Right cardiac atrium (tissue), 5 donors: ENCODE measurements at regions of chr5 and their contacts with region 1.

Region 1: GRCh38 chr5:54401515-54401914 is 54.0 kb upstream of the HSPB3 start:
- DNase-seq: no peak
- ATAC-seq: no peak
- H3K4me3 ChIP-seq: no peak overlapping the region
- H3K27ac ChIP-seq: no peak overlapping the region
- H3K4me1 ChIP-seq: no peaks in the 10 kb centered on the region
- H3K27me3 ChIP-seq: no peaks in the 10 kb centered on the region

Region 2: DNA sequence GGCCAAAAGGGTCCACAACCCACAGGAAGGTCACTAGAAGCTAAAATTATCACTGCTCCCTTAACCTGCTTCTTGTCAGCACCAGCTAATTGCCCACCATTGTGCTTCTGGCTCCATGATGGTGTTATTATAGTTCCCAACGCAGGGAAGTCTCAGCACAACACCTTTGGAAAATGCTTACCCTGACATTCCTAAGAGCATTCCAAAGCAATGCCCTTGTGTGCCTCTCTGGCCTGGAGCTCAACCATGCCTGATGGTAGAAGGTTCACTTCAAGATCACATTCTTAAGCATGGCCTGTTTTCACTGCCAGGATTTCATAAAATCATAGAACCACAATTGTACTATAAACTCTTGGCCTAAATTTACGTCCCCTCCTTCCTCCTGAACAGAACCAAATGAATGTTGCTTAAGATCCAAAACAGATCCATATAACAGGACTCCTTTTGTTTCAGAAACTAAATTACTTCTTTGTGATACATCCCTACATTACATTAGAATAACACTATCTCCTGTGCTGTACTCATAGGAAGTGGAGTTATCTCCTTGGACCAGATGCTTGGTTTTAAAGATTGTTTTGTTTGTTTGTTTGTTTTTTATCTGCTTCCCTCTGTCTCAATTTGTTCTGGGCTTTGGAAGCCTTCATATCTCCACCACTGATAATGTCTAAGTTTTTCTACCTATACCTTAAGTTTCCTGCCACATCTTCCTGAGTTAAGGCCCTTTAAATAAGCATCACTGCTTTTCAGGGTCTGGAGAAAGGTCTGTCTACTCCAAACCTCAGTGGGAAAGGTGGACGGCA is 123.3 kb before region 1 on chr5:
- intact Hi-C with region 1: no loop called
- DNase-seq: no peak
- ATAC-seq: peak in 1 of 2 donors; percentile 24
- H3K4me3 ChIP-seq: no peak overlapping the region
- H3K27ac ChIP-seq: no peak overlapping the region
- H3K4me1 ChIP-seq: no peaks in the 10 kb centered on the region
- H3K27me3 ChIP-seq: no peaks in the 10 kb centered on the region

Region 3: DNA sequence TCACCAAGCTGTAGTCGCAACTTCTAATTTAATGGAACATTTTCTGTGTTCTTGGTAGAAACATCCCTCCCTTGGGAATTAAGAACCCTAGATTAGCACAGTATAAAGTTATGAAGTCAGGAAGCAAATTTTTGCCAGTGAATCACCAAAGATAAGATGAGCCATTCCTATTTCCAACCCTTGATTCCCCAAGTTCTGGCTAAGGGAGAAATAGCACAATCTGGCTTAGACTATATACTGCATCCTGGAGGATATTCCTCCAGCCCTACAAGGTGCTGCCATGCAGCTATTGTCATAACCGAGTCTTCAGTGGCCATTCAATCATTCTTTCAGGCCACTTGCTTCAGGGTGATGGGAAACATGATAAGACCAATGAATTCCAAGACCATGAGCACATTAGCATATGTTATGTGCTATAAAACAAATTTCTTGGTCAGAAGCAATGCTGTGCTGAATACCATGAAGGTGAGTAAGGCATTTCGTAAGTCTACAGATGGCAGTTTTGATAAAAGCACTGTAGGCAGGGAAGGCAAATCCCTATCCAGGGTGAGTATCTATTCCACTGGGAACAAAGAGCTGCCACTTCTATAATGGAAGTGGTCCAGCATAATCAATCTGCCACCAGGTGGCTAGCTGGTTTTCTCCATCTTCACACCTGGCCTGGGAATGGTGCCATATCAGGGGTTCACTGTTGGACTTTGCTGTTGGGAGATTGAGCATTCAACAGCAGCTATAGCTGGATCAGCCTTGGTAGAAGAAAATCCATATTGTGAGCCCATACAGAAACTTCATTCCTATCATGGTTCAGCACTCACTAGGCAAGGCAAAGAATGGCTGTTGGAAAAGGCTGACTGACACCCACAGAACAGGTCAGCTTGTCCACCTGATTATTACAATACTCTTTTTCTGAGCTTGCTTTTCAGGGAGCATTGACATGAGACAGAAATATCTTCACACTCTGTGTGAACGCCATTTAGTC is 71.5 kb before region 1 on chr5:
- intact Hi-C with region 1: loop called in 1 of 4 experiments (anchors 10 kb)
- DNase-seq: no peak
- ATAC-seq: peak; percentile 71
- H3K4me3 ChIP-seq: no peak overlapping the region
- H3K27ac ChIP-seq: no peak overlapping the region
- H3K4me1 ChIP-seq: no peaks in the 10 kb centered on the region
- H3K27me3 ChIP-seq: no peaks in the 10 kb centered on the region

Region 4: DNA sequence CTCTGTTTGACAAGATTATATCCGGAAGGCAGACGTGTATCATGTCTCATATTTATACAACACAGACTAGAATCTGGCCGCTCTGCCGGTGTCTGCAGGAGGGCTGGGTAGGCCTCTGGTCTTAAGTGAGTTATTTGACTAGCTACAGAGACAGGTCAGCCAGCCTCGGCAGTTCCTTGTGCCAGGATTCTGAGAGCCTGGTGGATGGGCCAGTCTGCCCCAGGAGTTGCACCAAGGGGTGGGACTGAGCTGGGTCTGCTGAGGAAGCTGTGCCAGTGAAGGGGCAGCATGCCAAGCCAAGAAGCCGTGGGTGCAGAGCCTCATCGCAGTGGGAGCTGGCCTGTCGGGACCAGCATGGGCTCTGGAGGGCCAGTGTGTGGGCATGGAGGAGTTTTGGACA is 123.2 kb after region 1 on chr5:
- intact Hi-C with region 1: no loop called
- DNase-seq: peak; percentile 40 to 74 (median 72)
- ATAC-seq: peak; percentile 28 to 40
- H3K4me3 ChIP-seq: no peak overlapping the region
- H3K27ac ChIP-seq: no peak overlapping the region
- H3K4me1 ChIP-seq: peaks cover 18% of the 10 kb centered on the region
- H3K27me3 ChIP-seq: no peaks in the 10 kb centered on the region

Region 5: DNA sequence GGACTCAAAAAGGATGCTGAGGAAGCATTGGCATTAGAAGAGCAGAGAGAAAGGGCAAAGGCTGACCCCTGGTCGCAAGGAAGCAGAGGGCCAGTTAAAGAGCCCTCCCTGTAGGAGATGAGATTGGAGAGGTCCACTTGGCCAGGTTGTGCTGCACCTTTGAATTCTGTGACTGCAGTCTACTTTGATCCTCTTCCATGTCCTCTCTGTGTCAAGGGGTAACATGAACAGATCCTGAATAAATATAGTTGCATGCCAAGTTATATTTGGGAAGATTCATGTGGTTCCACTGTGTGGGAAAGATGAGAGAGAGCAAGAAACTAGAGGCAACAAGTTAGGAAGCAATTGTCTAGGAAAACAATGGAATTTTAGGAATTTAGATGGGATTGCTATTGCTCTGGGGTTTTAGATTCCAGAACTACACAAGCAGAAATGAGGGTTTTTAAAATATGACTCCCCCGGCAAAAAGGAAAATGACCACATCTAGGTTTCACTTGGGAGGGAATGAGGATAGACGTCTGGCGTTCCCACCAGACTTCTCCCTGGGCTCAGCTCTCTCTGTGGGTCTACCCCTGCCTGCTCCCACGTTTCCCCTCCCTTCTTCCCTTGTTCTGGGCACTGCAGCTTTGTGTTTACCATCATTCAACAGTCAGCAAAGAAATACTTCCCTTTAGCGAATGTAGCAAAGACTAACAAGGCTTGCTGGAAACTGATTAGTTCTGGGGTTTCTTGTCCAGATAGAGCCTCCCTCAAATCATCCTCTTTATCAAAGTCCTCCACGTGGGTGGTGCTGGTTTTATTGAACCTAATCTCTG is 179.7 kb after region 1 on chr5:
- intact Hi-C with region 1: no loop called
- DNase-seq: no peak
- ATAC-seq: peak; percentile 62 to 65
- H3K4me3 ChIP-seq: no peak overlapping the region
- H3K27ac ChIP-seq: no peak overlapping the region
- H3K4me1 ChIP-seq: no peaks in the 10 kb centered on the region
- H3K27me3 ChIP-seq: no peaks in the 10 kb centered on the region